Right cardiac atrium (tissue), 5 donors: ENCODE measurements at regions of chr2 and their contacts with region 1.

Region 1: GRCh38 chr2:219029829-219030165 is 11.5 kb downstream of the CFAP65 start:
- DNase-seq: peak; percentile 72 to 89 (median 89)
- ATAC-seq: peak; percentile 82 to 85
- H3K4me3 ChIP-seq: no peak overlapping the region
- H3K27ac ChIP-seq: no peak overlapping the region
- H3K4me1 ChIP-seq: no peaks in the 10 kb centered on the region
- H3K27me3 ChIP-seq: no peaks in the 10 kb centered on the region

Region 2: DNA sequence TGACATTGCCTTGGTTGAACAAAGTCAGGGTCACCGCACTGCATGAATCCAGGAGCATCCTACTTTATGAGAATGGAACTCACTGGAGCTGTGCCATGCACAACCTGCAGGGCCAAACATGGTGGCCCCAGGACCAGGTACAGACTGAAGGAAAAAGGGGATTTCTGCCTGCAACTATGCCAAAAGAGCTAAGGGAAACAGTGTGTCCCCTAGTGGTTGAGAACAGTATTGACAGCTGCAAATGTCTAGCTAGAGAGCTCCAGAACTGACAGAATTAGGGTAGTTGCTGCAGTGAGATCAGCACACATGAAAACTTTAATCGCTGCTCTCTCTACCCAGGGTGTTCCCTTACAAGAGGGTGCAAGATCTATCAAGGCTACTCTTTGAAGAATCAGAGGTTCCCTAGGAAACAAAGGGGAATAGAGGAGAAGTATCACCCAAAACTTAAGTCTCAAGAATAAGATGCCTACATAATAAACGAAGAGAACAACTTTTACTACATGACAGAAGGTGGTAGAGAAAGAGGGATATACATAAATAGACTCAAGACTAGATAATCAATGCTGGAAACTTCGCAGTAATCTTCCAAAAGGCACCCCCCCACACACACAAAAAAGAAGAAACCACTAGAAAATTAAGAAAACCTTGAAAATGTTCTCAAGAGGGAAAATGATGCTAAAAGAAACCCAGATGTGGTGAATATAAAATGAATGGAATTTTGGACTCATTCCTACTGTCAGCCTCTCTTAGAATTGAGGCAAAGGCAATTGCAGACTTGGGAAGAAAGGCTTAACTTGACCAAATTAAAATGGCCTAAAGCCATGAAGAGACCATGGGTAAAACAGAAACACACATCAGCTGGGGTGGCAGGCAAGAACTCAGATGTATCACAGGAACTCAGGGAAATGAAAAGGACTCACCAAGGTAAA is 74.6 kb after region 1 on chr2:
- intact Hi-C with region 1: no loop called
- DNase-seq: no peak
- ATAC-seq: no peak
- H3K4me3 ChIP-seq: no peak overlapping the region
- H3K27ac ChIP-seq: no peak overlapping the region
- H3K4me1 ChIP-seq: peaks cover 6% of the 10 kb centered on the region
- H3K27me3 ChIP-seq: no peaks in the 10 kb centered on the region

Region 3: DNA sequence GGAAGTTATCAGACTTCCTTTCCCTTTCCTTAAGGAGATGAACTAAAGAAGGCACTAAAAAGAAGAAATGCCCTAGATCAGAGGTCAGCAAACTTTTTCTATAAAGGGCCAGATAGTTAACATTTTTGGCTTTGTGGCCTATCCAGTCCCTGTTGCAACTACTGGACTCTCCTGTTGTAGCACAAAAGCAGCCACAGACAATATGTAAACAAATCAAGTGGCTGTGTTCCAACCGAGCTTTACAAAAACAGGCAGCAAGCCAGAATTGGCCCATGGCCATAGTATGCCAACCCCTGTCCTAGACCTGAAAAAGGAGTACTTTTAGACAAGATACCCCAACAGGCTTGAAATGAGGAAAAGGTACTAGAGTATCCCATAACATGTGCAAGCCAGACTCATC is 119.9 kb after region 1 on chr2:
- intact Hi-C with region 1: loop called in 1 of 4 experiments (anchors 5 kb)
- DNase-seq: no peak
- ATAC-seq: no peak
- H3K4me3 ChIP-seq: no peak overlapping the region
- H3K27ac ChIP-seq: no peak overlapping the region
- H3K4me1 ChIP-seq: no peaks in the 10 kb centered on the region
- H3K27me3 ChIP-seq: no peaks in the 10 kb centered on the region

Region 4: GRCh38 chr2:219177552-219178376 is 148.0 kb after region 1 on chr2 and contains the start of gene RETREG2:
- intact Hi-C with region 1: no loop called
- DNase-seq: peak; percentile 88 to 94 (median 94)
- ATAC-seq: peak; percentile 85 to 90
- H3K4me3 ChIP-seq: peak within 1 kb of the TSS; percentile 72
- H3K27ac ChIP-seq: peak within 1 kb of the TSS; percentile 100
- H3K4me1 ChIP-seq: peaks cover 2% of the 10 kb centered on the region
- H3K27me3 ChIP-seq: no peaks in the 10 kb centered on the region
- total RNA-seq, gene RETREG2: 35.2 to 47.3 (median 40.2) TPM